H1 (cell line): ENCODE measurements at regions of chr1 and their contacts with region 1.

Region 1: GRCh38 chr1:9101510-9102146 is 27.3 kb downstream of the GPR157 start:
- DNase-seq: peak; percentile 17 to 68
- H3K4me3 ChIP-seq: no peak overlapping the region
- H3K27ac ChIP-seq: no peak overlapping the region
- H3K4me1 ChIP-seq: peaks cover 0 to 2% (median 0%) of the 10 kb centered on the region in 4 experiments; a peak in 3 of 7 replicates
- H3K27me3 ChIP-seq: no peaks in the 10 kb centered on the region
- CTCF ChIP-seq: peak; percentile 81 to 86 (median 85)
- EP300 ChIP-seq: no peak
- POLR2A ChIP-seq: no peak
- RAD21 ChIP-seq: peak; percentile 90

Region 2: GRCh38 chr1:9014475-9015375 is 86.9 kb before region 1 on chr1:
- CTCF ChIA-PET with region 1: interaction called, 156 read pairs
- POLR2A ChIA-PET with region 1: interaction called, 26 read pairs
- DNase-seq: no peak
- H3K4me3 ChIP-seq: no peak overlapping the region
- H3K27ac ChIP-seq: no peak overlapping the region
- H3K4me1 ChIP-seq: no peaks in the 10 kb centered on the region; a peak in 1 of 7 replicates
- H3K27me3 ChIP-seq: no peaks in the 10 kb centered on the region
- CTCF ChIP-seq: no peak
- EP300 ChIP-seq: no peak
- POLR2A ChIP-seq: no peak
- RAD21 ChIP-seq: no peak

Region 3: DNA sequence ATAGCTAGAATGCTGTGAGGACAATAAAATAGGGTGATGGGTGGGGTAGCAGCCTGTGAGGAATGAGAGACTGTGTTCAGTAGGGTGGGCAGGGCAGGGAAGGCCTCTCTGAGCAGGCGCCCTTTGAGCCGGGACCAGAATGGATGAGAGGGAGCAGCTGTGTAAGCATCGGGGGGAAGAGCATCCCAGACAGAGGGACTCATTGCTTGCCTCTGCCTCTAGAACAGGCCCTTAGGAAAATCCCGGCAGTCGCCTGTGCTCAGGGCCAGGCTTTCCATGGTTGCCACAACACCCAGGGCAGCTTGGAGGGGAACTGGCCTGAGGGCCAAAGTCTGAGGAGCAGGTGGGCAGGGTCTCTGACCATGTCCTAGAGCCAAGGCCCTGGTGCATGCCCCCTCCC is 76.2 kb before region 1 on chr1:
- CTCF ChIA-PET with region 1: interaction called, 12 read pairs
- POLR2A ChIA-PET with region 1: no interaction called
- DNase-seq: no peak
- H3K4me3 ChIP-seq: no peak overlapping the region
- H3K27ac ChIP-seq: no peak overlapping the region
- H3K4me1 ChIP-seq: no peaks in the 10 kb centered on the region
- H3K27me3 ChIP-seq: no peaks in the 10 kb centered on the region
- CTCF ChIP-seq: no peak
- EP300 ChIP-seq: no peak
- POLR2A ChIP-seq: no peak
- RAD21 ChIP-seq: no peak

Region 4: DNA sequence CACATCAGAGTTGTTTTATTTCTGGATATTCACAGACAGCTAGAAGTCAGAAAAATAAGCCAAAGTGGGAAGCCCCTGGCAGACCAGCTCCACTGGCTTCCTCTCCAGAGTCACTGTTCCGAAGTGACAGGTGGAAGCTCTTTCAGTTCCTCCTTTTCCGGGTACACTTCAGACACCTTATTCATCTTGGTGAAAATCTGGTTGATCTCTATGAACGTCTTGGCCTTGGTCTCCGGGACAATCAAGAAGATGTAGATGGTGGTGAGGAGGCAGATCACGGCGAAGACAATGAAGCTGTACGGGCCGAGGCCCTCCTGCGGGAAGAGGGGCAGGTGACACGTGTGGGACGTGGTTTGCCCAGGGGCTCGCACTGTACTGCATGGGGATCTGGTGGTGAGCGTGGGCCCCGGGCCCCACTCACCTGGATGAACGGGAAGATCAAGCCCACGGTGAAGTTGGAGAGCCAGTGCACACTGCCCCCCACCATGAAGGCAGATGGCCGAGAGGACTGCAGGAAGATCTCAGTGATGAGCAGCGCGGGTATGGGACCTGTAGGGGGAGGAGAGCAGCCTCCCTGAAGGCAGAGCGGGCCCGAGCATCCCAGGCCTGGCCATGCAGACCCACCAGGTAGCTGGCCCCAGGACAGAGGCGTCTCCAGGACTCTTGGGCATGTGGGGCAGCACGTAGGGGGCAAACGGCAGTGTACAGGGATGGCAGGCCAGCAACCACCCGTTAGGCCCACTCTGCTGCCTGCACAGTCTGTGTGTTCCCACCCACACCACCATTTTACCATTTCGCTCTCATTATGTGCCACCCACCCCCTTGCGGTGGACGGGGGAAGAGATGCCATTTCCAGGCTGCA is 63.9 kb before region 1 on chr1:
- CTCF ChIA-PET with region 1: interaction called, 16 read pairs
- POLR2A ChIA-PET with region 1: no interaction called
- DNase-seq: no peak
- H3K4me3 ChIP-seq: no peak overlapping the region
- H3K27ac ChIP-seq: no peak overlapping the region
- H3K4me1 ChIP-seq: peaks cover 0 to 2% (median 0%) of the 10 kb centered on the region in 4 experiments; a peak in 2 of 7 replicates
- H3K27me3 ChIP-seq: no peaks in the 10 kb centered on the region; a peak in 1 of 7 replicates
- CTCF ChIP-seq: peak in 1 of 3 experiments; percentile 4; a peak in 1 of 4 replicates
- EP300 ChIP-seq: no peak
- POLR2A ChIP-seq: no peak
- RAD21 ChIP-seq: no peak

Region 5: DNA sequence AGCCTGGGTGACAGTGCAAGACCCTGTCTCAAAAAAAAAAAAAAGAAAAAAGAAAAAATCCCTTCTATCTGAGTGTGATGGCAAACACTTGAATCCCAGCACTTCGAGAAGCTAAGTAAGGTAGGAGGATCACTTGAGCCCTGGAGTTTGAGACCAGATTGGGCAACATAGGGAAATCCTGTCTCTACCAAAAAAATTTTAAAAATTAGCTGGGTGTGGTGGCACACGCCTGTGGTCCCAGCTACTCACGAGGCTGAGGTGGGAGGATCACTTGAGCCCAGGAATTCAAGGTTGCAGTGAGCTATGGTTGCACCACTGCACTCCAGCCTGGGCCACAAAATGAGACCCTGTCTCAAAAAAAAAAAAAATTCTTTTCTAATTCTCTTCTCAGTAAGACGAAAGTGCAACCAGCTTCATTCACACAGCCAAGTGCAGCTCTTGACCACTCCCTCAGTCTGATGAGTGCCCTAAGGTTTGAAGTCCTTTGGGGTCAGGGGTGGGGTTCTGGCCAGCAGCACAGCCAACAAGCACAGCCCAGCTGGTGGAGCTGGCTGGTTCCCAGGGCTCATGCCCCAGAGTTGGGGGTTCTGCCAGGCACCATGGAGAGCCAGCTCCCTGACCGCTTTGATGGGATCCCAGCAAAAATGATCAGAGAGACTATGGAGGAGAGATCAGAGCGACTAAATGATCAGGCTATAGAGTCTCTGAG is 40.2 kb before region 1 on chr1:
- CTCF ChIA-PET with region 1: interaction called, 11 read pairs
- POLR2A ChIA-PET with region 1: no interaction called
- DNase-seq: no peak
- H3K4me3 ChIP-seq: no peak overlapping the region
- H3K27ac ChIP-seq: no peak overlapping the region
- H3K4me1 ChIP-seq: peaks cover 0 to 3% (median under 1%) of the 10 kb centered on the region in 4 experiments; a peak in 3 of 7 replicates
- H3K27me3 ChIP-seq: no peaks in the 10 kb centered on the region
- CTCF ChIP-seq: no peak
- EP300 ChIP-seq: no peak
- POLR2A ChIP-seq: no peak
- RAD21 ChIP-seq: no peak

Region 6: DNA sequence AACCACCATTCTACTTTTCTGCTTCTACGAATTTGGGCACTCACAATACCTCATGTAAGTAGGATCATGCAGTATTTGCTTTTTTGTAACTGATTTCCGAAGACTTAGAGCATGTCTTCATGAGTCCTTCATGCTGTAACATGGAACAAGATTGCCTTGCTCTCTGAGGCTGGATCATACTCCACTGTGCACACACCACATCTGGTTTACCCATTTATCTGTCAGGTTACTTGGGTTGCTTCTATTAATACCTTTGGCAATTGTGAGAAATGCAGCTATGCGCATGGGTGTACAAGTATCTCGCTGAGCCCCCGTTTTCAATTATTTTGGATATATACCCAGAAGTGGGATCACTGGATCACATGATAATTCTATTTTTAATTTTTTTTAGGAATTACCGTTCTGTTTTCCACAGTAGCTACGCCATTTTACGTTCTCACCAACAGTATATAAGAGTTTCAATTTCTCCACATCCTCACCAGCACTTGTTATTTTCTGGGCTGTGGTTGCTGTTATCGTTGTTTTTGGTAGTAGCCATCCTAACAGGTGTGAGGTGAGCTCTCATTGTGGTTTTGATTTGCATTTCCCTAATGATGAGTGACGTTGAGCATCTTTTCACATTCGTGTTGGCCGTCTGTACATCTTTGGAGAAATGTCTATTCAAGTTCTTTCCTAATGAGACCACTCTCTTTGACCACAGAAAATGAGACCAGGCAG is 21.5 kb before region 1 on chr1:
- CTCF ChIA-PET with region 1: interaction called, 20 read pairs
- POLR2A ChIA-PET with region 1: interaction called, 3 read pairs
- DNase-seq: no peak
- H3K4me3 ChIP-seq: no peak overlapping the region
- H3K27ac ChIP-seq: no peak overlapping the region
- H3K4me1 ChIP-seq: no peaks in the 10 kb centered on the region
- H3K27me3 ChIP-seq: no peaks in the 10 kb centered on the region
- CTCF ChIP-seq: no peak
- EP300 ChIP-seq: no peak
- POLR2A ChIP-seq: no peak
- RAD21 ChIP-seq: no peak

Region 7: DNA sequence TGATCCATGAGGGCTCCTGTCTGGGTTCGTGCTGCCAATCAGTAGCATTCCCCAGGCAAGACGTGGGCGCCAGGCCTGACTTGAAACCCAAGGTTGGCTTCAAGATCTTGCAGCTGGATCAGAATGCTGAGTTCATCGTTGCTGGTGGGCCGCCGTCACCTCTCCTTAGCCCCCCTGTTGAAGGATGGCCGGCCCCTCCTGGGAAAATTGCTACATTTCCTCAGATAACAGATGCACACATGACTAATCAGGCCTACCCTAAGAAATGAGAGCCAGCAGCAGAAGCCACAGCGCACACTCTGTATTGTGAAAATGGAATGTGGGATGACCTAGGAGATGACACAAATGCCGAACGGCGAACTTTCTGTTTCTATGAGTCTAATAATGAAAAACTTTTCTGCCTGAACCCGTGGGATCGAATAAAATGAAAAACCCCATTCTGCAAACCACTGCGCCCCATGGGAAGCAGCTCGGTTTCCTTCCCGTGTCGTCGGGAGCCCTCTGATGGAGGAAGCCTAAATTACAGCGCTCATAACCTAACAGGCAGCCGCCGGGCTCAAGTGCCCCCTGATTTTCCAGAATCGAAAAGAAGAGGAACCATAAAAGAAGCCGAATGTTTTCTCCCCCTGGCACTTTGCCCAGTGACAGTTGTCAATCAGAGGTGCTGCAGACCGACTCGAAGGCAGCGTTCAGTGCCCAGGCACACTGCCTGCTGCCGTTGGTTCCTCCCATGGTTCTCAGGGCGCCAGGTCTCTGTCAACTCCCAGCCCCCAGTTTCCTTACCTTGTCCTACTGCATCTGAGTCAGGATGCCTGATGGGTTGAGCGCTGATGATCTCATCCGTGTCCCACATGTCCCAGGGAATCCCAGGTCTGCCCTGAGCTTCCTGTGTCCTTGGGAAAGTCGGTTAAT is 94.8 kb after region 1 on chr1:
- CTCF ChIA-PET with region 1: interaction called, 15 read pairs
- POLR2A ChIA-PET with region 1: interaction called, 4 read pairs
- DNase-seq: peak in 1 of 2 experiments; percentile 82
- H3K4me3 ChIP-seq: no peak overlapping the region
- H3K27ac ChIP-seq: no peak overlapping the region
- H3K4me1 ChIP-seq: peaks cover 0 to 11% (median 6%) of the 10 kb centered on the region in 4 experiments; a peak in 6 of 7 replicates
- H3K27me3 ChIP-seq: peaks cover 36 to 48% (median 46%) of the 10 kb centered on the region in 4 experiments
- CTCF ChIP-seq: peak; percentile 66 to 89 (median 69)
- EP300 ChIP-seq: no peak
- POLR2A ChIP-seq: no peak
- RAD21 ChIP-seq: peak; percentile 86 to 91

Region 8: GRCh38 chr1:9240914-9241820 is 139.5 kb after region 1 on chr1:
- CTCF ChIA-PET with region 1: no interaction called
- POLR2A ChIA-PET with region 1: no interaction called
- DNase-seq: no peak
- H3K4me3 ChIP-seq: no peak overlapping the region
- H3K27ac ChIP-seq: no peak overlapping the region
- H3K4me1 ChIP-seq: peaks cover 5 to 16% (median 12%) of the 10 kb centered on the region in 4 experiments; a peak in 6 of 7 replicates
- H3K27me3 ChIP-seq: no peaks in the 10 kb centered on the region; a peak in 1 of 7 replicates
- CTCF ChIP-seq: no peak
- EP300 ChIP-seq: no peak
- POLR2A ChIP-seq: peak in 1 of 2 experiments; percentile 58; a peak in 1 of 3 replicates
- RAD21 ChIP-seq: no peak